GM18951 (cell line): ENCODE measurements at regions of chr9 and their contacts with region 1.

Region 1: GRCh38 chr9:6498982-6499381 is 86.0 kb downstream of the UHRF2 start:
- POLR2A ChIP-seq: no peak

Region 2: DNA sequence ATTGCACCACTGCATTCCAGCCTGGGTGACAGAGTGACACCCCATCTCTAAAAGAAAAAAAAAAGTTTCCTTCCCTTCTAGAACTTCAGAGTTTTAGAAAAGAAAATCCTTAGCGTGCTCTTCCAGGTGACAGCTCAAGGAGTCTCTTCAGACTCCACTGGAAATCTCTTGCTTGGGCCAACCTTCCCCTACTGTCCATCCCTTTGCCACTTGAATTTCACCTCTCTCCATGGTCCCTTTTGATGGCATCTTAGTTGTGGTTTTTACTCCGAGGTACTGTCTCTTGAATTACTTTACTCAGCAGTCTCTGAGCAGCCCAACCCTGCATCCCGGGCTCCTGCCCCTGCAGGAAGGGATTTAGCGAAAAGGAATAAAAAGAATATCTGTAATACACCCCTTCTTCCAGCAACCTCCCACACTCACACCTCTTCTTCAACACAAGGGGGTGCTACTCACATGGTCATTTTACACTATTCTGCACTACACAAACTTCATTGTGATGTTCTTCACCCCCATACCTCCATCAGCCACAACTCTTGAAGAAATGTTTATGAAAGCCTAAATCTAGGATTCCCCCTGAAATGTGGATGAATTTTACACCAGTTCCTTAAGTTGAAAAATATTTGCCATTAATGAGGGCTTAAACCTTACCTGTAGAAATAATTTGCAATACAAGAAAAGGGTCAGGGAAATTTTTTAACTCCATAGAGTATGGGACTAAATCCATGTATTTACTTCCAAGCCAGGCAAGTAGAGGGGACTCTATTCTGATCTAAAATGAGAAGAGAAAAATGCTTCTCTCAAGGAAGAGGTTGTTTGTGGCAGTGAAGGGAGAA is 144.9 kb before region 1 on chr9:
- in situ Hi-C with region 1: loop called (anchors 25 kb)
- POLR2A ChIP-seq: no peak